WTC11 (cell line): ENCODE measurements at regions of chr2 and their contacts with region 1.

Region 1: DNA sequence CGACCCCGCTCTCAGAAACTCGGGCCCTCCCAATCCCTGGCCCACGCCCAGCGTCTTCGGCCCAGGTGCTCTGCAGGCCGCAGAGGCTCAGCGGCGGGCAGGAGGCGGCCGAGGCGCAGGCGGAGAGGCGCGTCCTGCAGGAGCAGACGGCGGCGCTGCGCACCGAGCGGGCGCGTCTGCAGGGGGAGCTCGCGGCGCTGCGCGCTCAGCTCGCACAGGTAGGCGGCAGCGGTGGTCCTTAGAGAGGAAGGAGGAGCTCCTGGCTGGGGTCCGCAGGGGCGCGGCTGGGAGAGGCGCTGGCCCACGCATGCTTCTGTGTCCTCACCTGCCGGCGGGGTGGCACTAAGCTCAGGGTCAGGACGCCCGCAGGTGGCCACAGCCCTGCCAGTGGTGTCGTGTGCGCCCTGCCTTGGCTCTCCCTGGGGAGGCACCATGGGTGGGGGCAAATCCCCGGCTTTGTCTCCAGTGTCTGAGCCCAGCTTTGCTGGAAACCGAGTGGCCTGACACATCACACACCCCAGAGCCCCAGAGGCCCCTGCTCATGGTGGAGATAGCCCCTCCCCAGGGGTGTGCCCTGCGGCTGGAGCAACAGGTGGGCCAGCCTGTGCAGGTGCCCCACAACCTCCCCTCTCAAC is 14.9 kb upstream of the SNED1 start:
- DNase-seq: peak; percentile 84
- ATAC-seq: peak; percentile 99
- H3K4me3 Mint-ChIP-seq: no peak overlapping the region
- H3K27ac Mint-ChIP-seq: no peak overlapping the region
- H3K4me1 Mint-ChIP-seq: no peaks in the 10 kb centered on the region
- H3K27me3 Mint-ChIP-seq: peaks cover 2% of the 10 kb centered on the region; the same call in 1 of the 2 replicates
- CTCF ChIP-seq: peak; percentile 60

Region 2: DNA sequence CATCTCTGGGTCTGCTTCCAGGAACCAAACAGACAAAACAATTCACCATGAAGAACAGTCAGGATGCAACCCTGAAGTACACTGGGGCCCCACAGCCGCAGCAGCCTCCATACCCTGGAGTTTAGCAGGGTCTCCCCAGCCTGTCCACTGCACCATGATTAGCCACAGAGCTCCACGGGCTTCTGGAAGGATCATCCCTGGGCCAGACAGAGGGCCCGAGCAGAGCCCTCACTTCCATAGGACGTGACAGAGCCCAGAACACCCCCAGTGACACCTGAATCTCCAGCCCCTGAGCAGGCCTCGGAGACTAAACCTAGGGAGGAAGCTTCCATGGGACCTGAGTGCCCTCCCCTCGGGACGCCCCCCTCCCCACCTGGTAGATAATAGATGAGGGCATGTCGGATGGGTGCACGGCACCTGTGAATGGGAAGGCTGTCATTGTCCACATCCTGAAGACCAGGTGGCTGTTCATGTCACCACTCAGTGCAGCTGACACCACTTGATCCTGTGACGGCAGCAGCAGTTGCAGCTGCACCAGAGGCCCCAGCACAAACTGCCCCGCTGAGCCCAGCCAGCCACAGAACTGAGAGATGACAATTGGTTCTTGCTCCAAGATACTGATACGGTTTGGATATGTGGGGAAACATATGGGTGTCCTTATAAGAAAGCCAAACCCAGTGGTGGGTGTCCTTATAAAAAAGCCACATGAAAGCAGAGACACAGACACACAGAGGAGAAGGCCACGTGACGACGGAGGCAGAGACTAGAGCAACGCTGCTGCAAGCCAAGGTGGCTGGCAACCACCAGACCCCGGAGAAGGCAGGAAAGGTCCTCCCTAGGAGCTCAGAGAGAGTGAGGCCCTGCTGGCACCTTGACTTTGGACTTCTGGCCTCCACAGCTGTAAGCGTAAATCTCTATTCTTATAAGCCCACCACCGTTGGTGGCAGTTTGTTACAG is 186.7 kb before region 1 on chr2:
- CTCF ChIA-PET with region 1: no interaction called
- POLR2A ChIA-PET with region 1: no interaction called
- DNase-seq: no peak
- ATAC-seq: no peak
- H3K4me3 Mint-ChIP-seq: no peak overlapping the region
- H3K27ac Mint-ChIP-seq: peak overlapping the region; percentile 65; the same call in 1 of the 2 replicates
- H3K4me1 Mint-ChIP-seq: peaks cover 23% of the 10 kb centered on the region
- H3K27me3 Mint-ChIP-seq: no peaks in the 10 kb centered on the region
- CTCF ChIP-seq: no peak

Region 3: GRCh38 chr2:240851078-240851991 is 132.1 kb before region 1 on chr2:
- CTCF ChIA-PET with region 1: interaction called, 17 read pairs
- POLR2A ChIA-PET with region 1: no interaction called
- DNase-seq: peak; percentile 94
- ATAC-seq: peak; percentile 99
- H3K4me3 Mint-ChIP-seq: no peak overlapping the region
- H3K27ac Mint-ChIP-seq: 0 out of 2 replicates have a peak overlapping the region, but pooled peaks have one; percentile 53
- H3K4me1 Mint-ChIP-seq: peaks cover 10% of the 10 kb centered on the region
- H3K27me3 Mint-ChIP-seq: no peaks in the 10 kb centered on the region; the same call in none of the 2 replicates
- CTCF ChIP-seq: peak; percentile 89

Region 4: GRCh38 chr2:240965296-240965904 is 18.1 kb before region 1 on chr2:
- CTCF ChIA-PET with region 1: interaction called, 11 read pairs
- POLR2A ChIA-PET with region 1: interaction called, 3 read pairs
- DNase-seq: no peak
- ATAC-seq: no peak
- H3K4me3 Mint-ChIP-seq: no peak overlapping the region
- H3K27ac Mint-ChIP-seq: no peak overlapping the region
- H3K4me1 Mint-ChIP-seq: peaks cover 5% of the 10 kb centered on the region; the same call in 1 of the 2 replicates
- H3K27me3 Mint-ChIP-seq: no peaks in the 10 kb centered on the region
- CTCF ChIP-seq: no peak

Region 5: GRCh38 chr2:240998120-240998994 is 14.9 kb after region 1 on chr2 and contains the start of gene SNED1:
- CTCF ChIA-PET with region 1: interaction called, 16 read pairs
- POLR2A ChIA-PET with region 1: interaction called, 3 read pairs
- DNase-seq: peak; percentile 88
- ATAC-seq: peak; percentile 91
- H3K4me3 Mint-ChIP-seq: peak within 1 kb of the TSS; percentile 56
- H3K27ac Mint-ChIP-seq: no peak within 1 kb of the TSS
- H3K4me1 Mint-ChIP-seq: no peaks in the 10 kb centered on the region
- H3K27me3 Mint-ChIP-seq: peaks cover 39% of the 10 kb centered on the region
- CTCF ChIP-seq: no peak
- total RNA-seq, gene SNED1: 2.5 to 3.2 TPM (median 2.7 TPM) in 3 replicates

Region 6: DNA sequence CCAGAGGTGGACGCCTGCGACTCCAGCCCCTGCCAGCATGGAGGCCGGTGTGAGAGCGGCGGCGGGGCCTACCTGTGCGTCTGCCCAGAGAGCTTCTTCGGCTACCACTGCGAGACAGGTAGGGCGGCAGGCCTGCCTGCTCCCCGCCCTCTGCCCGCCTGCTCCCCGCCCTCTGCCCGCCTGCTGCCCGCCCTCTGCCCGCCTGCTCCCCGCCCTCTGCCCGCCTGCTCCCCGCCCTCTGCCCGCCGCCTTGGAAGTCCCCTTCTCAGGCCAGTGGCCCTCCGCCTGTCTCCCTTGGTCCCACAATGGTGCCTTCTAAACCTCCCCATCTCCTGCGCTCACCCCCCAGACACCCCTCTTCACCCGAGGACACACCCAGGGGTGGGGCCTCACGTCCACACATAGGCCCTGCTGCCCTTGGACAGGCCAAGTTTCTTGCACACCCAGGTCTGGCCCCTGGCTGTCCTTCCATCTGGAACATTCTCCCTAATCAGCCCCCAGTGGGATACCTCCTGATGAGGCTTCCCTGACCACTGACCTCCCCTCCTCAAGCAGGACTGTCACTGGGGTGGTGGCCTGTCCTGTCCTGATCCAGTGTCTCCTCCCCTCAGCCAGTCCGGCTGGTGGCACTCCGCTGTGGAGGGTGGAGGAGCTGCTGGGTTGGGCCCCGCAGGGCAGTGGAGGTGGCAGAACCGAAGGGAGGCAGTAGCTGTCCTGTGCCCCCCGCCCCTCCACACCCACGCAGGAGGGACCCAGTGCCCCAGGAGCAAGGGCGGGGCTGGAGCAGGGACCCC is 80.7 kb after region 1 on chr2:
- CTCF ChIA-PET with region 1: interaction called, 10 read pairs
- POLR2A ChIA-PET with region 1: no interaction called
- DNase-seq: peak; percentile 43
- ATAC-seq: peak; percentile 55
- H3K4me3 Mint-ChIP-seq: peak overlapping the region; percentile 14; the same call in 1 of the 2 replicates
- H3K27ac Mint-ChIP-seq: no peak overlapping the region
- H3K4me1 Mint-ChIP-seq: no peaks in the 10 kb centered on the region
- H3K27me3 Mint-ChIP-seq: no peaks in the 10 kb centered on the region
- CTCF ChIP-seq: no peak